ENCODE measurements at regions of chr16 and their contacts with region 1.

Region 1: DNA sequence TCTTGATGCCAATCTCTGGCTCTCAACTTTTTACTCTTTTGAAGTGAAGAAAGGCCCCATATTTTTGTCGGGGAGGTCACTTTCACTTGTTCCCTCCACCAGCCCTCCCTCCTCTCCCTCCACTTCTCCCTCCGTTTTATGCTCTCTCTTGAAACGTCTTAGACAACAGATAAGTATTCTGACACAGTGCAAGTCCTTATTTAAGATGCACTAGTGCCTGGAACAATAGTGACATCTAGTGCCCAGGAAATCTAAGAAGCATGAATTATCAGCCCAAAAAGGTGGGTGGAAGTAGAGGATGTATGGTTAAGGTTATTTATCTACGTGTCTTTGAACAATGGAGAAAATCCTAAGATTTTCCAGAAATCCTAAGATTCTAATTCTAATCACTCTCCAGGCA is 17.9 kb downstream of the PSME3IP1 start:
- DNase-seq: no peak
- ATAC-seq: peak; percentile 62 to 87
- H3K4me3 ChIP-seq: no peak overlapping the region
- H3K27ac ChIP-seq: no peak overlapping the region
- H3K4me1 ChIP-seq: peaks cover 8% of the 10 kb centered on the region
- H3K27me3 ChIP-seq: no peaks in the 10 kb centered on the region

Region 2: GRCh38 chr16:57077714-57078113 is 90.2 kb before region 1 on chr16:
- intact Hi-C with region 1: loop called in 3 of 4 experiments (anchors 5 kb)
- DNase-seq: no peak
- ATAC-seq: peak in 1 of 2 donors; percentile 8
- H3K4me3 ChIP-seq: no peak overlapping the region
- H3K27ac ChIP-seq: no peak overlapping the region
- H3K4me1 ChIP-seq: no peaks in the 10 kb centered on the region
- H3K27me3 ChIP-seq: no peaks in the 10 kb centered on the region

Region 3: DNA sequence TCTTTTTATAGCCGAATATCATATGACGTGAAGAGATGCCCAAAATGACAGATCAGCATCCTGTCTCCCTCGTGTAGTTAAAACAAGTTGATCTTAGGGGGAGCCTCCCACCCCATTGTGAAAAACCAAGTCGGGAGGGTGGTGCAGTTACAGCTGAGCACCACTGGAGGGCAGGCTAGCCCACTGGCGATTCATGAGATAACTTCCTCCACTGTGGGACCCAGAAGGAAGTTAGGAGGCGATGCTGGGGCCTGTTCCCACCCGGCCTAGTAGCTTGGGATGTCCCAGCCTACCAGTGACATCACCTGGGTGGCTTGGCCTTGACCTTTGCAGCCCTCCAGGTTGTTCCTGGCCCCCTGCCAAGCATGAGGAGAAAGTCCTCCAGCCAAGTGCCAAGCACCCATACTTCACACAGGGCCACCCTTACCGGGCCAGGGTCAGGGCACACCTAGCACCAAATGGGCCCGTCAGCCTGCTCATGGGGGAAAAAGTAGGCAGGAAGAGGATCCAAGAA is 83.6 kb before region 1 on chr16:
- intact Hi-C with region 1: loop called in 3 of 4 experiments (anchors 5 kb)
- DNase-seq: peak; percentile 63 to 83 (median 83)
- ATAC-seq: peak; percentile 75 to 81
- H3K4me3 ChIP-seq: no peak overlapping the region
- H3K27ac ChIP-seq: no peak overlapping the region
- H3K4me1 ChIP-seq: no peaks in the 10 kb centered on the region
- H3K27me3 ChIP-seq: no peaks in the 10 kb centered on the region

Region 4: DNA sequence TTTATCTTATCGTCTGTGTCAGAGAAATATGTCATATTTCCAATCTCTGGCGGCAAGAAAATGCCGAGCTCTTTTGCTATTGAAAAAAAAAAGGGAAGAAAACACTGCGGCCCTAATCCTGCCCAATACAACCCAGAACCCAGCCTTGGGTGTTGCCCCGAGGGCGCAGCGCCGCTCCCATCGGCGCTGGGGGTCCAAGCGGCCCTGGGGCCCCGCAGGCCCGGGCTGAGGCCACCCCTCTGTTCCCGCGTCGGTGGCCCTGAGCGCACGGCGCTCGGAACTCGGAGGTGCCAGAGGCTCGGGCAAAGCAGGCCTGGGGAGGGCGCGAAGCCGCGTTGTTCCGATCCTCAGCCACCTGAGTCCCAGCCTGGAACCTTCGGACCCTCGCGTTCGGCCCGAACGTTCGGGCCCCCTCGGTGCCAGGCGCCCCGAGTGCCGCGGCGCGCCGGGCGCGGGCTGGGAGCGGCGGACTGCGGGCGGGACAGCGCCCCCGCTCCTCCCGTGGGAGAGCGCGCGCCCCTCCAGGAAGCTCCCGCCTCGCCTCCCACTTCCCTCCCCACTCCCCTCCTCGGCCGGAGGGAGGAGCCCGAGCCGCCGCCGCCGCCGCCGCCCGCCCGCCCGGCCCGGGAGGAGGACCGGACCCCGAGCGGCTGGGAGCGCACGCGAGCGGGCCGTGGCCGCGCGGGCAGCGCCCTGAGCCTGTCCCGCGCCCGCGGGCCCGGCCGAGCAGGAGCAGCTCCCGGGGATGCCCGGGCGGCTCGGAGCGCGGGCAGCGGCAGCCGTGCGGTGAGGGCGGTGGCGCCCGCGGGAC is 75.8 kb before region 1 on chr16 and contains the start of gene CPNE2:
- intact Hi-C with region 1: loop called in 1 of 4 experiments (anchors 5 kb)
- DNase-seq: peak; percentile 69 to 91 (median 87)
- ATAC-seq: peak; percentile 74 to 88
- H3K4me3 ChIP-seq: peak within 1 kb of the TSS; percentile 98
- H3K27ac ChIP-seq: peak within 1 kb of the TSS; percentile 82
- H3K4me1 ChIP-seq: no peaks in the 10 kb centered on the region
- H3K27me3 ChIP-seq: no peaks in the 10 kb centered on the region
- total RNA-seq, gene CPNE2: 13.4 to 16.3 (median 13.6) TPM